Activated naive CD4-positive, alpha-beta T cell treated with anti-CD3 and anti-CD28 coated beads, Interleukin-2, amount 10 ng/mL, durations not matched to agents 7 days and 5 days (primary cell): ENCODE measurements at regions of chr2 and their contacts with region 1.

Region 1: GRCh38 chr2:192162392-192163042 is 32.2 kb downstream of the TMEFF2 start:
- DNase-seq: peak; percentile 70
- H3K4me3 Mint-ChIP-seq: no peak overlapping the region
- H3K27ac Mint-ChIP-seq: no peak overlapping the region
- H3K4me1 Mint-ChIP-seq: peaks cover 5% of the 10 kb centered on the region
- H3K27me3 Mint-ChIP-seq: no peaks in the 10 kb centered on the region

Region 2: GRCh38 chr2:191539068-191539467 is 623.4 kb before region 1 on chr2:
- CTCF ChIA-PET with region 1: interaction called, 16 read pairs
- DNase-seq: peak; percentile 59
- H3K4me3 Mint-ChIP-seq: no peak overlapping the region
- H3K27ac Mint-ChIP-seq: no peak overlapping the region
- H3K4me1 Mint-ChIP-seq: no peaks in the 10 kb centered on the region
- H3K27me3 Mint-ChIP-seq: peaks cover 9% of the 10 kb centered on the region

Region 3: GRCh38 chr2:191811807-191812602 is 350.5 kb before region 1 on chr2:
- CTCF ChIA-PET with region 1: interaction called, 59 read pairs
- DNase-seq: peak; percentile 42
- H3K4me3 Mint-ChIP-seq: no peak overlapping the region
- H3K27ac Mint-ChIP-seq: no peak overlapping the region
- H3K4me1 Mint-ChIP-seq: no peaks in the 10 kb centered on the region
- H3K27me3 Mint-ChIP-seq: peaks cover 21% of the 10 kb centered on the region